ENCODE measurements at regions of chr12 and their contacts with region 1.

Region 1: GRCh38 chr12:50825372-50825838 is 17.3 kb upstream of the TMPRSS12 start:
- DNase-seq: peak; percentile 50
- H3K4me3 ChIP-seq: no peak overlapping the region
- H3K27ac ChIP-seq: no peak overlapping the region
- H3K27me3 ChIP-seq: no peaks in the 10 kb centered on the region
- CTCF ChIP-seq: peak; percentile 37

Region 2: DNA sequence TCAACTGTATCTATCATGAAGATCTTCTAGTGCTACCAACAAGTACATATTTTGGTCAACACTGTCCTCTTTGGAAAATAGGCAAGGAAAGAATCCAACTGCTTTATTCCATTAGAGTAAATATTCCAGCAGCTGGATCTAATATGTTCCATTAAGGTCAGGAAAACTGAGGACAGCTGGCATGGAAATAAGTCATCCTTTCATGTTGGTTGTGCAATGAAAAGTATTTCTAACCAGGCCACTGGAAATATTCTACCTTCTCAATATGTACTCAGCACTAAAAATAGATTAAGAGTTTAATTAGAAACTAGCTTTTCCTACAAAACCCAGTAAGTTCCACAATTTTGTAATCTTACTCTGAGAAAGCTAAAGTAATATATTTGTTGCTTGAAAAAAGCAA is 146.5 kb after region 1 on chr12:
- CTCF ChIA-PET with region 1: no interaction called
- POLR2A ChIA-PET with region 1: no interaction called
- DNase-seq: no peak
- H3K4me3 ChIP-seq: no peak overlapping the region
- H3K27ac ChIP-seq: no peak overlapping the region
- H3K27me3 ChIP-seq: no peaks in the 10 kb centered on the region
- CTCF ChIP-seq: no peak

Region 3: GRCh38 chr12:51047655-51048540 is 222.5 kb after region 1 on chr12 and contains the start of gene LETMD1:
- CTCF ChIA-PET with region 1: interaction called, 14 read pairs
- POLR2A ChIA-PET with region 1: no interaction called
- DNase-seq: peak; percentile 95
- H3K4me3 ChIP-seq: peak within 1 kb of the TSS; percentile 71
- H3K27ac ChIP-seq: peak within 1 kb of the TSS; percentile 83
- H3K27me3 ChIP-seq: no peaks in the 10 kb centered on the region
- CTCF ChIP-seq: peak; percentile 95
- polyA plus RNA-seq, gene LETMD1: 45.1 and 48.1 TPM in 2 replicates

Measured in AG04450 (cell line).